A549 (cell line): ENCODE measurements at regions of chr1 and their contacts with region 1.

Region 1: DNA sequence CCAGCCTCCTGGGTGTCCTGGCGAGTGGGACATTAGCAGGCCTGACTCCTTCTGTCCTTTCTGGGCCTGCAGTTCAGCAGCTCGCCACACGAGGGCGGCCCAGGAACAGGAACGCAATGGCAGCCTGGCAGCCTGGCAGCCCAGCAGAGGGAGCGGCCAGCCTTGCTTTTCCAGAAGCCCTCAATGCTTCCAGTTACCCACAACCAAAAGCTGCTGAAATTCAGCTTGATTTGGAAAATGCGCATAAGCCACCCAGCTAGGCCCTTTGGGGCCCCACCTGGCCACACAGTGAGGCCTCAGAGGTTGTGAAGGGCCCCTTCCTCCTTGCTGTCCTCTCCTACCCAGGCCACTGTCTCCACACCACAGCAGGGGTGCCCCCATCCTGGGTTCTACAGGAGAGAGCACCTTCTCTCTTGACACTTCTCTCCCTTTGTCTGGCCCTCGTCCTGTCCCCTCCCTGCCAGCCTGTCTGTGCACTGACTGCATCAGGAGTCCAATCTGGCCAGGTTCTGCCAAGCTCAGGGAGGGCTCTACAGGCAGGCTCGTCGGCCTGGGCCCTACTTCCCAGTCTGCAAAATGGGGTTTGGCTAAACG is 103.4 kb upstream of the VAMP3 start:
- DNase-seq: peak; percentile 66 to 75
- ATAC-seq: peak; percentile 75 to 88
- H3K4me3 ChIP-seq: no peak overlapping the region
- H3K27ac ChIP-seq: peak overlapping the region in 1 of 2 experiments; percentile 61; a peak in 2 of 6 replicates
- H3K4me1 ChIP-seq: 0 out of 3 replicates have a peak, but pooled peaks cover 3% of the 10 kb centered on the region
- CTCF ChIP-seq: peak; percentile 91
- EP300 ChIP-seq: no peak
- POLR2A ChIP-seq: no peak
- RAD21 ChIP-seq: peak; percentile 93 to 96

Region 2: DNA sequence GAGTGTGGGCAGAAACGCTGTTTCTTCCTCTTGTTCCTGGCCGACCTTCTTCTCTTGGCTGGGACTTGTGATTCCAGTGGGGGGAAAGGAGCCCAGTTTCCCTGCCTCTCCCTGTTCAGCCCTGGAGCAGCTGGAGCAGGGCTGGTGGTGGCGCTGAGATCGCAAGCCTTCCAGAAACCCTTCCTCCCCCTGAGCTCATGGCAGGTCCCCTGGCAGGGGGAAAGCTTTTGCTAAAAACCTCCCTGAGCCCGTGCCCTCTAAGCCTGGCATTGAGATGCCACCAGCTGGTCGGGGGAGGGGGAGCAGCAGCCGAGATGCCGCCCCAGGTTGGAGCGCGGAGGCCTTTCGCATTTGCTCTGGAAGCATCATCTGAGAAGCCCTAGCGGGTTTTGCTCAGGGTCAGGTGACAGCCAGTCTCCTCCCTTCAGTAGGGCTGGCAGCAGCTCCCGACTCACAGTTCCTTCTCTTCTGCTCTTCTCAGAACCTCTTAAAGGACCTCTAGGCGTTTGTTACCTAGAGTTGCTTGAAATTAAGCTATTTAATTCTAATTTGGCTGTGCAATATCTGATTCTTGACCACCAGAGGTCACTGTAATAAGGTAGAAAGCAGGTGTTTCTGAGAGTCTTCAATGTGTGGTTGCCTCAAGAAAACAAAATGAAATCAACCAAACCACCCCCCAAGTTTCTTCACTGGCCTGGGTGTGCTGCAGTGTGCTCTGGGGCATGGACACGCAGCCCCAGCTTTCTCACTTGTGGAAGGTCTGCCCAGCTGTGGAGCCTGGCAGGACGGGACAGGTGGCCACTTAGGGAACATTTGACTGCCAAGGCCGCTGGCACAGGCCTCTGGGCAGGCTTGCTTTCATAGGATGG is 625.2 kb before region 1 on chr1:
- CTCF ChIA-PET with region 1: interaction called, 11 read pairs
- POLR2A ChIA-PET with region 1: no interaction called
- DNase-seq: peak; percentile 48 to 50
- ATAC-seq: peak; percentile 47 to 75; a peak in 5 of 6 replicates
- H3K4me3 ChIP-seq: no peak overlapping the region
- H3K27ac ChIP-seq: peak overlapping the region; percentile 66 to 77
- H3K4me1 ChIP-seq: peaks cover 10% of the 10 kb centered on the region
- CTCF ChIP-seq: peak; percentile 65
- EP300 ChIP-seq: no peak
- POLR2A ChIP-seq: no peak
- RAD21 ChIP-seq: peak; percentile 72 to 79

Region 3: GRCh38 chr1:7680207-7680954 is 12.7 kb after region 1 on chr1:
- CTCF ChIA-PET with region 1: interaction called, 124 read pairs
- POLR2A ChIA-PET with region 1: interaction called, 6 read pairs
- DNase-seq: peak; percentile 21 to 31
- ATAC-seq: peak; percentile 57 to 73
- H3K4me3 ChIP-seq: peak overlapping the region; percentile 79
- H3K27ac ChIP-seq: peak overlapping the region; percentile 87 to 95
- H3K4me1 ChIP-seq: no peaks in the 10 kb centered on the region
- CTCF ChIP-seq: no peak
- EP300 ChIP-seq: no peak
- POLR2A ChIP-seq: peak; percentile 45
- RAD21 ChIP-seq: no peak

Region 4: DNA sequence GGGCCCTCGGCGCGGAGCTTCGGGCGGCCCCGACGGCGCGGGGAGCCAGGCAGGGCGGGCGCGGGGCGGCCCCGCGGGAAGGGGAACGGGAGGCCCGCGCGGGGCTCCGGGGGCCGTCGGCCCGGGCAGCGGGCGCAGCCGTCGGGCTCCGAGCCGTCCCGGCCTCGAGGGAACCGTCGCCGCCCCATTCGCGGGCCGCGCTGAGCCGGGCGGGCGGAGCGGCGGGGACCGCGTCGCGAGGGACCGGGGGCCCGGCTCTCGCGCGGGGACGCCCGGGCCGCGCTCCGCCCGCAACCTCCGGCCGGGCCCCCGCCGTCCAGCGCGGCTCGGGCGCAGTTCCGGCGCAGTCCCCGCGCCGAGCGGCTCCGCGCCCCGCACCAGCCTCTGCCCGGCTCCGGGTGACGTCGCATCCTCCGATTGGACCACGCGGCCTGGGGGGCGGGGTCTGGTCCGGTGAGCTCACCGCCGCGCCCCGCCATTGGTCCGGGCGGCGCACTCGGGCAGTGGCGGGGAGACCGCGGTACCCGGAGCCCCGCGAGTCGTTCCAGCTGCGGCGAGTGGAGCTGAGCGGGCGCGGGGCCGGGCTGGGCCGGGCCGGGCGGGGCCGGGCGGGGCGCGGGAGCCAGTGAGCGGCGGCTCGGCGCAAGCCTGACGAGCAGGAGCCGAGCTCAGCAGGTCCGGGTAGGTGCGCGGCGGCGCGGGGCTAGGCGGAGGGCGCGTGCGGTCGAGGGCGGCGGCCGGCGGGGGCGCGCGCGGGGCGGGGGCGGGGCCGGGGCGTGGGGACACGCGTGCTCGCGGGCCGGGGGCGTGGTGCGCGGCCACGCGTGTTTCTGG is 36.7 kb after region 1 on chr1:
- CTCF ChIA-PET with region 1: interaction called, 21 read pairs
- POLR2A ChIA-PET with region 1: no interaction called
- DNase-seq: peak; percentile 83 to 85
- ATAC-seq: peak; percentile 96 to 98
- H3K4me3 ChIP-seq: peak overlapping the region; percentile 44
- H3K27ac ChIP-seq: peak overlapping the region; percentile 24 to 82; a peak in 5 of 6 replicates
- H3K4me1 ChIP-seq: peaks cover 6% of the 10 kb centered on the region; the same call in 1 of the 3 replicates
- CTCF ChIP-seq: no peak
- EP300 ChIP-seq: no peak
- POLR2A ChIP-seq: no peak
- RAD21 ChIP-seq: no peak

Region 5: DNA sequence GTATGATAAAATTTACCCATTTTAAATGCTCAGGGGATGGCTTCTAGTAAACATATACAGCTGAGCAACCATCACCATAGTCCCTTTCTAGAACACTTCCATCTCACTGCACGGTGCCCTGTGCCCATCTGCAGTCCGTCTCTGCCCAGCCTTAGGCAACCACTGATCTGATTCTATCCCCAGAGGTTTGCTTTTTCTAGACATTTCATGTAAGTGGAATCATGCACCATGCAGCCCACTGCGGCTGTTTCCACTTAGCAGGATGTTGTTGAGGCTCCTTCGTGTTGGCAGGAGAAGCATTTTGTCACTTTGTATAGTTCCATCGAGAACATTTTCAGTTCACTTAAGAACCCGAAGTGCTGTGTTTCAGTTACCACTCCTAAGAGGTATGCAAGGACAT is 75.6 kb after region 1 on chr1:
- CTCF ChIA-PET with region 1: interaction called, 410 read pairs
- POLR2A ChIA-PET with region 1: no interaction called
- DNase-seq: no peak
- ATAC-seq: no peak
- H3K4me3 ChIP-seq: no peak overlapping the region
- H3K27ac ChIP-seq: no peak overlapping the region
- H3K4me1 ChIP-seq: no peaks in the 10 kb centered on the region
- CTCF ChIP-seq: no peak
- EP300 ChIP-seq: no peak
- POLR2A ChIP-seq: no peak
- RAD21 ChIP-seq: no peak

Region 6: DNA sequence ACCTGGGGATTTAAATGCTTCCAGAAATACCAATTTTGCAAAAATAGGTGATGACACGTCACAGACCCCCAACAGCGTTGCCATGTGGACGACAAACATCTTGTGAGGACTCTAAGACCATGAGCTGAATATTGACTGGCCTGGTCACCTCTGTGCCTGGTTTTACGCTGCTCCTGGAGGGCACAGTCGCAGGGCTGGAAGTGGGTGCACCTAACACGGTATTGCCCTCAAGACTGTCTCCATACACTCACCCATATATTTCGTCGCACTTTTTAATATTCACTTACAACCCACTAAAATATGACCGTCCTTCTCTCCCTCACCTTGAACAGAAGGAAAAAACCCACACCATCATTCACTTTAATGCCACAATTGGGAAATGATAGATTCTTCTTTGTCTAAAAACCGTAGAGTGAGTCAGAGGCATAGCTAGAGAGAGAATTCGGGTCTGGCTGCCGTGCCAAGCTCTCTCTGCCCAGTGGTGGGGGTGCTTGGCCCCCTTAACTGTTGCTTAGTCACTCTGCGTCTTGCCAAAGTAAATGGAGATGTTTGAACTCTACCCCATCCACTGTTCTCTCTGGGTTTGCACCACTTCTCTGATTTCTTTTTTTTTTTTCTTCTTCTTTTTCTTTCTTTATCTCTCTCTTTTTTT is 225.9 kb after region 1 on chr1:
- CTCF ChIA-PET with region 1: interaction called, 20 read pairs
- POLR2A ChIA-PET with region 1: no interaction called
- DNase-seq: peak in 1 of 2 experiments; percentile 44
- ATAC-seq: peak; percentile 92 to 94
- H3K4me3 ChIP-seq: no peak overlapping the region
- H3K27ac ChIP-seq: peak overlapping the region; percentile 56 to 78; a peak in 4 of 6 replicates
- H3K4me1 ChIP-seq: peaks cover 25% of the 10 kb centered on the region
- CTCF ChIP-seq: no peak
- EP300 ChIP-seq: no peak
- POLR2A ChIP-seq: no peak
- RAD21 ChIP-seq: no peak